IMR-90 (cell line): ENCODE measurements at regions of chr18 and their contacts with region 1.

Region 1: DNA sequence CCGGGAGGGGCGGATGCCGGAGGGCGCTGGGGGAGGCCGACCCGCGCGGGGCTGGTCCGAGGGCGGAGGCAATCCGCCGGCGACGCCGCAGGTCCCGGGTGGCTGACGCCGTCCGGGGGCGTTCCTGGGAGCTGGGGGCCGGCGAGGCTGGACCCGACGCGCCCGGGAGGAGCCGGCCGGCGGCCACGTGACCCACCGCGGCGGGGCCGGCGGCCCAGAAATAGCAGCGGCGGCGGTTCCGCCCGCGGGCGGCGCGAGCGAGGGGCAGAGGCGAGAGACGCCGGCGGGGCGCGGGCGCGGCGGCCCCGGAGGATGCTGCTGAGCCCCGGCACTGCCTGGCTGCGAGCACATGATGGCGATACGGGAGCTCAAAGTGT is at the start of gene RAB31:
- DNase-seq: peak; percentile 72
- ATAC-seq: peak; percentile 96
- H3K4me3 ChIP-seq: peak within 1 kb of the TSS; percentile 89
- H3K27ac ChIP-seq: peak within 1 kb of the TSS; percentile 92
- H3K4me1 ChIP-seq: peaks cover 26% of the 10 kb centered on the region
- H3K27me3 ChIP-seq: no peaks in the 10 kb centered on the region
- CTCF ChIP-seq: peak; percentile 19; the same call in 1 of the 2 replicates
- POLR2A ChIP-seq: peak; percentile 95
- RAD21 ChIP-seq: no peak; the same call in 1 of the 2 replicates
- total RNA-seq, gene RAB31: 26.9 and 28.9 TPM in 2 replicates

Region 2: GRCh38 chr18:9474983-9475642 is 232.9 kb before region 1 on chr18 and contains the start of gene RALBP1:
- CTCF ChIA-PET with region 1: no interaction called
- POLR2A ChIA-PET with region 1: no interaction called
- dilution Hi-C with region 1: no loop called
- in situ Hi-C with region 1: no loop called
- intact Hi-C with region 1: no loop called
- DNase-seq: peak; percentile 99
- ATAC-seq: peak; percentile 95
- H3K4me3 ChIP-seq: peak within 1 kb of the TSS; percentile 70
- H3K27ac ChIP-seq: peak within 1 kb of the TSS; percentile 90
- H3K4me1 ChIP-seq: peaks cover 4% of the 10 kb centered on the region; the same call in 1 of the 2 replicates
- H3K27me3 ChIP-seq: no peaks in the 10 kb centered on the region
- CTCF ChIP-seq: 0 out of 2 replicates have a peak, but pooled peaks have one; percentile 23
- POLR2A ChIP-seq: no peak
- RAD21 ChIP-seq: no peak
- total RNA-seq, gene RALBP1: 38.2 and 58.9 TPM in 2 replicates

Region 3: GRCh38 chr18:9570255-9570654 is 137.8 kb before region 1 on chr18:
- CTCF ChIA-PET with region 1: no interaction called
- POLR2A ChIA-PET with region 1: no interaction called
- dilution Hi-C with region 1: no loop called
- in situ Hi-C with region 1: no loop called
- intact Hi-C with region 1: no loop called
- DNase-seq: no peak
- ATAC-seq: no peak
- H3K4me3 ChIP-seq: no peak overlapping the region
- H3K27ac ChIP-seq: no peak overlapping the region
- H3K4me1 ChIP-seq: no peaks in the 10 kb centered on the region
- H3K27me3 ChIP-seq: no peaks in the 10 kb centered on the region
- CTCF ChIP-seq: no peak
- POLR2A ChIP-seq: no peak
- RAD21 ChIP-seq: no peak

Region 4: DNA sequence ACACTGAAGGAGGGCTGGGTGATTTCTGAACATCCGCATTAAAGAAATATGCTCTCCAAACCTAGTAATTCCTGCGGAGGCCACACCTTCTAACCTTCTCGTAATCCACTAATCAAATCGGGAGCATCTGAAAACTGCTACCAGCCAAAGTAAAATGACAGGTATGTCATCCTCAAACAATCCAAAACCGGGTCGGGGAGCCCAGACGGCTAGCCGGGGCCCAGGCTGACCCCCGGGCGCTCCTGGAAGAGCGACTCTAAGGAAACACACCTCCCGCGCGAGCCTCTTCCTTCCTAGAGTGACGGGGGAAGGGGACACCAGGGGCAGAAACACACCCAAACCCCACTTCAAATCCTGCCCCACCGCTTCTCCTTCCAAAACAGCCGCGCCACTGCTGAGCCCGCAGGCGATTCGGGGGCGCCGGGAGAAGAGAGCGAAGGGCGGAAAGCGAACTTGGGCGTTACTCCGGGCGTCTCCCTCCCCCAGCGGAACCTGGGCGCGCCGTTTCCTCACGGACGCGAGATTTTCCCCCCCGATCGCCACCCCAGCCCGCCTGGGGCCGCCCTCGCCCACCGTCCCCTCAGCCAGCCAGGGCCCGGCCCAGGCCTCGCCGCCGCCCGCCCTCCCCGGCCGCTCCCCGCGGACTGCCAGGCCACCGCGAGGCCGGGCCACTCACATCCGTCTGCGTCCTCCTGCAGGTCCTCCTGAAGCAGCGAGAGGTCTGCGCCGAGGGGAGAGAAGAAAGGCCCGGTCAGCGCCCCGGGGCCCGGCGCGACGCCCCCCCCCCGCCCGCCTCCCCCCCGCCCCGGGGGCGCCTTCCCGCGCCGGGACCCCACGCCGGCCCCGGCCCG is 94.3 kb before region 1 on chr18:
- CTCF ChIA-PET with region 1: no interaction called
- POLR2A ChIA-PET with region 1: no interaction called
- dilution Hi-C with region 1: no loop called
- in situ Hi-C with region 1: no loop called
- intact Hi-C with region 1: loop called (anchors 2 kb)
- DNase-seq: peak; percentile 27
- ATAC-seq: peak; percentile 44
- H3K4me3 ChIP-seq: peak overlapping the region; percentile 81
- H3K27ac ChIP-seq: peak overlapping the region; percentile 70
- H3K4me1 ChIP-seq: peaks cover 19% of the 10 kb centered on the region
- H3K27me3 ChIP-seq: no peaks in the 10 kb centered on the region
- CTCF ChIP-seq: no peak
- POLR2A ChIP-seq: peak; percentile 37; the same call in 1 of the 2 replicates
- RAD21 ChIP-seq: no peak

Region 5: GRCh38 chr18:9696112-9696511 is 11.9 kb before region 1 on chr18:
- CTCF ChIA-PET with region 1: no interaction called
- POLR2A ChIA-PET with region 1: no interaction called
- dilution Hi-C with region 1: no loop called
- in situ Hi-C with region 1: no loop called
- intact Hi-C with region 1: no loop called
- DNase-seq: no peak
- ATAC-seq: no peak
- H3K4me3 ChIP-seq: no peak overlapping the region
- H3K27ac ChIP-seq: no peak overlapping the region
- H3K4me1 ChIP-seq: peaks cover 2% of the 10 kb centered on the region
- H3K27me3 ChIP-seq: no peaks in the 10 kb centered on the region
- CTCF ChIP-seq: no peak
- POLR2A ChIP-seq: no peak
- RAD21 ChIP-seq: no peak

Region 6: DNA sequence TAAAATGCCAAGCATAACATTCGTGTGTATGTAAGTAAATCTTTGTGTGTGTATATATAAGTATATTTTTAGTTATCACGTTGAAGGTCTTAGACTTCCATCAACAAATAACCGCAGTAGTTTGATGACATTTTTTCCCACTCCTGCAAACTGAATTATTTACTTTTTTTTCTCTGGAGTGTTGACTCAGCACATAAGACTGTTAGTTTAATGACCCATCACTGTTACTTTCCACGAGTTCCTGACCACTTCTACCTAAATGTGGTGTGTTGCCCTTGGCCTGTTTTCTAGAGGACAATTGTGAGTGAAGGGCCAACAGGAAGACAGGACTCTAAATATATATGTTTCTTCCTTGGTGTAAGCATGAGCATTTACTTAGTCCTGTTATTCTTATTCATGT is 106.4 kb after region 1 on chr18:
- CTCF ChIA-PET with region 1: no interaction called
- POLR2A ChIA-PET with region 1: no interaction called
- dilution Hi-C with region 1: no loop called
- in situ Hi-C with region 1: no loop called
- intact Hi-C with region 1: loop called (anchors 5 kb)
- DNase-seq: peak; percentile 95
- ATAC-seq: peak; percentile 88
- H3K4me3 ChIP-seq: no peak overlapping the region
- H3K27ac ChIP-seq: no peak overlapping the region
- H3K4me1 ChIP-seq: peaks cover 6% of the 10 kb centered on the region
- H3K27me3 ChIP-seq: no peaks in the 10 kb centered on the region
- CTCF ChIP-seq: no peak
- POLR2A ChIP-seq: no peak
- RAD21 ChIP-seq: no peak

Region 7: DNA sequence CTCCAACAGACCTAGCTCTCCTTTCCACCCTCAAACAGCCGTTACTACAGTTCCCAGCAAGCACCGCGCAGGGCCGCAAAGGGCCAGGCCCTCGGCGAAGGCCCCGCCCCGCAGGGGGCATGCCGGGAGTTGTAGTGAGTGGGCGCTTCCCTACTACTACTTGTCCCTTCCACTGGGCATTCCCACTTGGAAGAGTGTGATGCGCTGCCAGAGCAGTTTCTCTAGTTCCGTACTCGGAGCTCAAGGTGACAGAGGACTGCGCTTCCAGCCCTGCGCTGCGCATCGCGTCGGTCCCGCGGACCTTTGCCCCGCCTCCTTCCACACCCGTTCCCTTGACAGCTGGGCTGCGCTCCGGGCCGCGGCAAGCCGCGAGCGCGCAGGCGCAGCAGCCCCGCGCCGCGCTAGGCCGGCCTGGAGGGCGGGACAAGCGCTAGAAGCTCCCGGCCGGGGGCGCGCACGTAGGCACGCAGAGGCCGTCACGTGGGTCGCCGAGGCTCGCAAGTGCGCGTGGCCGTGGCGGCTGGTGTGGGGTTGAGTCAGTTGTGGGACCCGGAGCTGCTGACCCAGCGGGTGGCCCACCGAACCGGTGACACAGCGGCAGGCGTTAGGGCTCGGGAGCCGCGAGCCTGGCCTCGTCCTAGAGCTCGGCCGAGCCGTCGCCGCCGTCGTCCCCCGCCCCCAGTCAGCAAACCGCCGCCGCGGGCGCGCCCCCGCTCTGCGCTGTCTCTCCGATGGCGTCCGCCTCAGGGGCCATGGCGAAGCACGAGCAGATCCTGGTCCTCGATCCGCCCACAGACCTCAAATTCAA is 205.7 kb after region 1 on chr18 and contains the start of gene VAPA:
- CTCF ChIA-PET with region 1: no interaction called
- POLR2A ChIA-PET with region 1: no interaction called
- dilution Hi-C with region 1: no loop called
- in situ Hi-C with region 1: no loop called
- intact Hi-C with region 1: loop called (anchors 5 kb)
- DNase-seq: peak; percentile 96
- ATAC-seq: peak; percentile 92
- H3K4me3 ChIP-seq: peak within 1 kb of the TSS; percentile 87
- H3K27ac ChIP-seq: peak within 1 kb of the TSS; percentile 96
- H3K4me1 ChIP-seq: peaks cover under 1% of the 10 kb centered on the region; the same call in 1 of the 2 replicates
- H3K27me3 ChIP-seq: no peaks in the 10 kb centered on the region
- CTCF ChIP-seq: no peak
- POLR2A ChIP-seq: peak; percentile 92
- RAD21 ChIP-seq: no peak
- total RNA-seq, gene VAPA: 206 and 273 TPM in 2 replicates

Region 8: GRCh38 chr18:9925369-9925768 is 217.3 kb after region 1 on chr18:
- CTCF ChIA-PET with region 1: no interaction called
- POLR2A ChIA-PET with region 1: no interaction called
- dilution Hi-C with region 1: no loop called
- in situ Hi-C with region 1: loop called (anchors 25 kb)
- intact Hi-C with region 1: no loop called
- DNase-seq: peak; percentile 70
- ATAC-seq: peak; percentile 59
- H3K4me3 ChIP-seq: no peak overlapping the region
- H3K27ac ChIP-seq: no peak overlapping the region
- H3K4me1 ChIP-seq: peaks cover 5% of the 10 kb centered on the region
- H3K27me3 ChIP-seq: no peaks in the 10 kb centered on the region
- CTCF ChIP-seq: no peak
- POLR2A ChIP-seq: no peak
- RAD21 ChIP-seq: no peak

Region 9: GRCh38 chr18:9951022-9951859 is 243.2 kb after region 1 on chr18:
- CTCF ChIA-PET with region 1: no interaction called
- POLR2A ChIA-PET with region 1: no interaction called
- dilution Hi-C with region 1: no loop called
- in situ Hi-C with region 1: loop called (anchors 25 kb)
- intact Hi-C with region 1: loop called (anchors 2 kb)
- DNase-seq: peak; percentile 79
- ATAC-seq: peak; percentile 85
- H3K4me3 ChIP-seq: no peak overlapping the region
- H3K27ac ChIP-seq: no peak overlapping the region
- H3K4me1 ChIP-seq: peaks cover under 1% of the 10 kb centered on the region; the same call in 1 of the 2 replicates
- H3K27me3 ChIP-seq: no peaks in the 10 kb centered on the region
- CTCF ChIP-seq: peak; percentile 70
- POLR2A ChIP-seq: no peak
- RAD21 ChIP-seq: peak; percentile 76